ENCODE measurements at regions of chr14 and their contacts with region 1.

Region 1: DNA sequence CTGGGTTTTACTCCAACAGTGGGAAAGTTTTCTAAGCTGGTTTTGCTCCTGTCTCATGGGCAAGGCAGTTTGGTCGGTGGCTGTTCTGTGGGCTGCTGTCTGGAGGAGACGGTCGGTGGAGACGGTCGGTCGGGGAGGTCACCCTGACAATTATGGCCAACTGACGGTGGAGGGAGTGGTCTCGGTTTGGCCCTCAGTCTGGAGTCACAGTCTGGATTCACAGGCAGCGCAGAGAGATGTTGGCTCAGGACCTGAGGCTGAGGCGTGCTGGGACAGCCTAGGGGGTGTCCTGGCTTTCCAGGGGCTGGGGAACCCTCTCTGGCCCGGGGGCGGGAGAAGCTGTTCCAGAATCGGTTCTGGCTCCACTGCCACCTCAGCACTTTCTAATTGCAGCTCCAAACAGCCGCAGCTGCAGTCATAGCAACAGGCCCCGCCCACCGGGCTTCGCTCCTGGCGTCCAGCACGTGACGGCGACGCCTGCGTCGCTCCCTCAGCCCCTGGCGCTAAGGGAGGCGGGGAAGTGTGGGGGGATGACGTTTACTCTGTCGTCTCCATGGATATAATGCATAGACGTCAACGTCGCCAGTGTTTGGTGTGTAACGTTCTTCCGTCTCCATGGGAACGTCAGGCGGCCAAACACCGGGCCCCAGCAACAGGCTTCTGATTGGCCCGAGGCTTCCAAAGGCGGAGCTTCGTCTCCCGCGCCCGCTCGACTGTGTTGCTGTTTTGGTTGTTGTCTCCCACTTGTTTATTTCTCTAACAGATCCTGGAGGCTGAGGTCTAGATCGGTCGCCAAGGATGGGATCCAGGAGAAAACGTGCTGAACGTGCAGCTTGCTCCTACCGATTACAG is 19.8 kb upstream of the FOS start:
- DNase-seq: peak; percentile 99
- ATAC-seq: peak; percentile 96

Region 2: DNA sequence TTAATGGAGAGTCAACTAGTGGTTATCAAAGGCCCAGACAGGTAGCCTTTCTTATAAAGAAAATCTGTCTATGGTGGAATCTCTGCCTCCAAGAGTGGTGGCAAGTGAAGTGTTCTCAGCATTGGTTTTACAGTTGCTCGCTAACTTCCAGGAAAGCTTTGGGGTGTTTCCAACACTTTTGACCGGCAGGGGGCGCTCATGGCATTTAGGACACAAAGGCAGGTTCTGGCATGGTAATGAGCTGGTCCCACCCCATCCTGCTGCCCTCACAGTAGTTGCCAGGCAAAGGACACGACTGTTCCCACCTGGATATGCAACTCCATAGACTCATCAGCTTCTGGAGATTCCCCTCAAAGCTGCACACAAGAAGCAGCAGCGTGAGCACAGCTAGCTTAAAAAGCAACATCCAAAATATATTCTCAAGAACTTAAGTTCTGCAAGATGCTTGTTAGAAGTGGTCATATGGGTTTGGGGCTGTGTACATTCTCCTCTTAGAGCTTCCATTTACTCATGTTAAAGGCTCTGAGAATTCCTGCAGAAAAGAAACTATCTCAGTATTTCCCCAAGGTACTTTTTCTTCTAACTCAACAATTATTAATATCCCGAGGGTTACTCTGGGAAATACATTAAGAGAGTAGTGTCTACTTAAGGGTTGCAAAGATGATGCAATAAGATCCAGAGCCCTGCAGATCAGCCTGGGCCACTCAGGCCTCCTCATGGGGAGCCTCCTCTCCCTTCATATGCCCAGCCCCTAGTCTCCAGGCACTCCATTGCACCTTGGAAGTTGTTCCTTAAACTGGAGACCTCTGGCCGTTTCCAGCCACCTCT is 397.7 kb before region 1 on chr14:
- intact Hi-C with region 1: no loop called
- DNase-seq: peak; percentile 94
- ATAC-seq: peak; percentile 82

Region 3: GRCh38 chr14:75147423-75148071 is 111.3 kb before region 1 on chr14:
- intact Hi-C with region 1: loop called (anchors 1 kb)
- DNase-seq: no peak
- ATAC-seq: peak; percentile 92

Region 4: DNA sequence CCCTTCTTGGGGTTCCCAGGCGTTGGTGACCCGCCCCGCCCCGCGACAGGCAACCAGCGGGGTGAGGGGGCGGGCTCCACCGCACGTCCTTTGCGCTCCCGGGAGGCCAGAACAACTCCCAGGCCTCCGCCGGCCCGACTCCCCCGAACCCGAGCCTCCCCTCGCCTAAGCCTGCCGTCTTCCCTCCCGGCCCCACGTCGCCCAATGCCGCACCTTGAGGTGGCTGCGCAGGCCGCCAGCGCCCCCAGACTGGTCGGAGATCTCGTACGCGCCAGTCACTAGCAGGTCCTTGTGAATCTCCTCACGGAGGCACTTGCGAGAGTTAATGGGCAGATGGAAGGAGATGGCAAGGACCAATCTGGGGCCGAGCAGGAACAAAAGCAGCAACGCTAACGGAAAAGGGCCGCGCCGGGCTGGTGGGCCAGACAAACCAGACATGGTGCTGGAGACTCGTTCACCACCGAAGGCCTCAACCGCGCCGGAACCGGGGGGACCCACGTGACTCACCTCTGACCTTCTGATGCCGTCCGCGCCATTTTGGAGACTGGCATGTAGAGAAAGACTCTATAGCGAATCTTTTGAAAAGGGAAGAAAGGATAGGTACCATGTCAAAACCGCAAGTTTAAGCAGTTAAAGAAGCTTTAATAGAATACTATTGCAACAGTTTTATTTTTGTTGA is 82.6 kb before region 1 on chr14 and contains the start of gene TMED10:
- intact Hi-C with region 1: loop called (anchors 5 kb)
- DNase-seq: peak; percentile 93
- ATAC-seq: peak; percentile 95
- total RNA-seq, gene TMED10: 280 TPM

Region 5: DNA sequence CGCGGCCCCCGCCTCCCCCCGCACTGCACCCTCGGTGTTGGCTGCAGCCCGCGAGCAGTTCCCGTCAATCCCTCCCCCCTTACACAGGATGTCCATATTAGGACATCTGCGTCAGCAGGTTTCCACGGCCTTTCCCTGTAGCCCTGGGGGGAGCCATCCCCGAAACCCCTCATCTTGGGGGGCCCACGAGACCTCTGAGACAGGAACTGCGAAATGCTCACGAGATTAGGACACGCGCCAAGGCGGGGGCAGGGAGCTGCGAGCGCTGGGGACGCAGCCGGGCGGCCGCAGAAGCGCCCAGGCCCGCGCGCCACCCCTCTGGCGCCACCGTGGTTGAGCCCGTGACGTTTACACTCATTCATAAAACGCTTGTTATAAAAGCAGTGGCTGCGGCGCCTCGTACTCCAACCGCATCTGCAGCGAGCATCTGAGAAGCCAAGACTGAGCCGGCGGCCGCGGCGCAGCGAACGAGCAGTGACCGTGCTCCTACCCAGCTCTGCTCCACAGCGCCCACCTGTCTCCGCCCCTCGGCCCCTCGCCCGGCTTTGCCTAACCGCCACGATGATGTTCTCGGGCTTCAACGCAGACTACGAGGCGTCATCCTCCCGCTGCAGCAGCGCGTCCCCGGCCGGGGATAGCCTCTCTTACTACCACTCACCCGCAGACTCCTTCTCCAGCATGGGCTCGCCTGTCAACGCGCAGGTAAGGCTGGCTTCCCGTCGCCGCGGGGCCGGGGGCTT is 19.8 kb after region 1 on chr14 and contains the start of gene FOS:
- intact Hi-C with region 1: loop called (anchors 1 kb)
- DNase-seq: peak; percentile 97
- ATAC-seq: peak; percentile 87
- total RNA-seq, gene FOS: 9.5 TPM